GM13976 (cell line): ENCODE measurements at regions of chr15 and their contacts with region 1.

Region 1: DNA sequence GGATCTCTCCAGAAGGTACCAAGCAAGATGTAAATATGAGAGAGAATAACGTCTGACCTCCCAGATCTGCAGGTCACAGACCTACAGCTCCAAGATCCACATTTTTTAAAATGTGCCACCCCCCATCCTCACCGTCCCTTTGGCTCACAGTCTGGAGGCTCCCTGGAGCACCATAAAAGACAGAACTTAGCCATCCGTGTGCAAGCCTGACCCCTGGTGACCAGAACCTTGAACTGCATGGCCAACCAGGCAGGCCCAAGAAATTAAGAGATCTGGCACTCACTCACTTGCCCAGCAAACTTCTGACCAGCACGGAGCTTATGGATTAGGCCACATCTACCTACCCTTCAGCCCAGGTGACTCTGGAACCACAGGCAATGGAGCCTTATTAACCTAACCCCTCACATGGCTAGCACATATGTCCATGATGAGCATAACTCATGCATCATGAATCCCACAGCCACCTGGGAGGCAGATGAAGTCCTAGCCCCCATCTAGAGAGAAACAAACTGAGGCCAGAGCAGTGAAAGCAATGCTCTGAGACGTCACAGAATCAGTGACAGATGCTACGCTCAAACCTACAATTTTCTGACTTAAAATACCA is 275.3 kb downstream of the UACA start:
- DNase-seq: peak; percentile 76
- CTCF ChIP-seq: peak; percentile 94

Region 2: DNA sequence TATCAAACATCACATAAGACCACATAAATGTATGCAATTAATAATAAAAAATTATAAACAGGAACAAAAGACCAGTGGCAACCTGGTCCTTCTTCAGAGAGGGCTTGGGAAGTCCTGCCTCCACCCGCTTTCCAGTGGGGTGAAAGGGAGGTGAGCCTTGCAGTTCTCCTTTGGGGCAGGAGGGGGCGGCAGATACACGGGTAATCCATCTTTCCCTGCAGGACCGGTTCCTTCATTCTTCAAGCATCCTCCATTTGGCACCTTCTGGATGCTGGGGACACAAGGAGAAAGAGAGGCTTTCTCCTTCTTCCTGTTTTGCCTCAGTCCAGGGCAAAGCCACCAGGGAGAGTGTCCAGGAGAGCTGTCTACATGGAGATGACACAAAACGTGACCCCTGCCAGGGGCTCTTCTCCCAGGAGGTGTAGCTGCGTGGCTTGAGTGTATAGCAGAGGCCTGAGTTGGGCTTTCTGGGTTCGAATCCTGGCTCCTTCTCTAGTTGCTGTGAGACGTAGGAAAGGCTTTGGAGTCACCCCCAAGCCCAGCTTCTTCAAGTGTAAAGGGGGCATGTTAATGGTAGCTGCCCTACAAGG is 1012.2 kb before region 1 on chr15:
- in situ Hi-C with region 1: loop called (anchors 25 kb)
- DNase-seq: peak; percentile 77
- CTCF ChIP-seq: peak; percentile 92

Region 3: GRCh38 chr15:69729161-69729748 is 758.8 kb before region 1 on chr15:
- in situ Hi-C with region 1: loop called (anchors 25 kb)
- DNase-seq: peak; percentile 69
- CTCF ChIP-seq: peak; percentile 66

Region 4: DNA sequence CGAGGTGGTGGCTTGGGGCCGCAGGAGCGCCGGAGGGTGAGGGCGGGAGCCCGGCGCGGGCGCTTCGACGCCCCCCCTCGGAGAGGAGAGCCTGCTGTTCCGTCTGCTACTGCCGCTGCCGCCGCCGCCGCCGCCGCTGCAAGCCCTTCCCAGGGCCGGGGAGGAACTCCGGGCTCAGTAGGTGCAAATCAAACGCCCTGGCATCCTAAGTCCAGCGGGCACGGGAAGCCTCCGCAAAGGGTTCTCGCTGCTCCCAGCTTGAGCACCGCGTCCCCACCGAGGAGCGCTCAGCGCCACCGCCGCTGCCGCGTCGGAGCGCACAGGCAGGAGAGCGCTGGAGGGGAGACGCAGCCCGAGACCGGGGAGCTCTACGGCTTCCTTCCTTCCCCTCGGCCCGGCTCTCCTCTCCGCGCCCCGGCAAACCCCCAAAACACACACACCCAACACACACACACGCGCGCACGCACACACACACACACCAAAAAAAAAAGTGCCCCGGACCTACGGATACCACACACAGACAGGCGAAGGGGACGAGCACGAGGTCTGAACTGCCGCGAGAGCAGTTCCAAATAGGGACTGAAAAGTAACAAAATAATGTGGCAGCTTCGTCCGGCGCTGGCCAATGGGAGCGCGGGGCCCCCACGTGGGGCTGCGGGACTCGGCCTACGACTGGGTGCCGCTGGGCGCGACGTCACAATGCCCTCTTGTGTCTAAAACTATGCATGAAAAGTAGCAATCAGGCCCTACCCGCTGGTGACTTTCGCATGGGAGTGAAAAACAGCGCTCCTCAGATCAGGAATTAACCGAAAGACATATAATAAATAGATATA is 390.6 kb before region 1 on chr15 and contains the start of gene TLE3:
- in situ Hi-C with region 1: loop called (anchors 10 kb)
- DNase-seq: peak; percentile 99
- CTCF ChIP-seq: peak; percentile 57